Activated CD8-positive, alpha-beta T cell treated with anti-CD3 and anti-CD28 coated beads, Interleukin-2, amount 10 ng/mL, durations not matched to agents 7 days and 5 days (primary cell): ENCODE measurements at regions of chr2 and their contacts with region 1.

Region 1: GRCh38 chr2:985317-985898 is 34.8 kb downstream of the SNTG2 start:
- DNase-seq: peak; percentile 49
- ATAC-seq: peak; percentile 76
- H3K4me3 Mint-ChIP-seq: peak overlapping the region; percentile 34
- H3K27ac Mint-ChIP-seq: peak overlapping the region; percentile 80
- H3K4me1 Mint-ChIP-seq: peaks cover 25% of the 10 kb centered on the region
- H3K27me3 Mint-ChIP-seq: peaks cover 3% of the 10 kb centered on the region

Region 2: DNA sequence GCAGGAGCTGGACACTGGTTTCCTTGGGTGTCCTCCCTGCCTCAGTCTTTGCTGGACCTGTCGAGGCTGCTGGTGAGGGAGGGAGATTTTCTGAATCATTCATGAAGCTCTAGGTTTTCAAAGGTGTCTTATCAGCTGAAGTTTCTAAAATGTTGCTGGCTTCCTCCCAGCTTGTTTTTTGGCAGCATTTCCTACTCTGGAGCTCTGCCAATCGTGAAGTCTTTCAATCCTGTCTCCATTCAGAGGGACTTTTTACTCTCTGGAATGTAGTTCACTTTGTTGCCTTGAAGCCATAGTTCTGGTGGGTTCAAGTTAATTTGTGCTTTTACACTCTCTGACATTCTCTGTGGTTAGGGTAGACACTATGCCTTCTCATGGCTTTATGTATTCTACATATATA is 10.9 kb before region 1 on chr2:
- CTCF ChIA-PET with region 1: interaction called, 9 read pairs
- POLR2A ChIA-PET with region 1: interaction called, 18 read pairs
- DNase-seq: peak; percentile 33
- ATAC-seq: peak; percentile 35
- H3K4me3 Mint-ChIP-seq: peak overlapping the region; percentile 68
- H3K27ac Mint-ChIP-seq: peak overlapping the region; percentile 90
- H3K4me1 Mint-ChIP-seq: peaks cover 76% of the 10 kb centered on the region
- H3K27me3 Mint-ChIP-seq: no peaks in the 10 kb centered on the region

Region 3: DNA sequence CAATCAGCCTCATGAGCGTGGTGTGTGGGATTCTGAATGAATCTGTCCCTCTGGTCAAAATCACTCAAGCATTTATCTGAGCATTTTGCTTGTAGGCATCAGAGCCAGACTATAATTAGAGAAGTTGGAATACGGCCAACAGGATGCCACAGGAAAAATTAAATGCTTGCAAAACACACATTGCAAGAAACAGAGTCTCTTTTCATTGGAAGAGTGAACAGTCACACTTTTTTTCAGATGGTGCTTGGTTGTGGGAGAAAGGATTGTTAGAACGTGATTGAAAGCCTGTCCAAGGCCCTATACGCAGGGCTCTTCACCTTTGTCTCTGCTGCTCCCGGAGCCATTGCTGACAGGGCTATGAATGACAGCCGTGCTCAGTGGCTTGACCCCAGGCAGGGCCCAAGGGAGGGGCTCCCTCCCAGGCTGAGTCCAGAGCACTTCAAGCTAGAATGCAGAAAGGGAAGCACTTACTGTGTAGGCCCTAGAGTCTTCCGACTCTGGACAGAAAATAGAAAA is 25.1 kb after region 1 on chr2:
- CTCF ChIA-PET with region 1: no interaction called
- POLR2A ChIA-PET with region 1: no interaction called
- DNase-seq: no peak
- ATAC-seq: no peak
- H3K4me3 Mint-ChIP-seq: no peak overlapping the region
- H3K27ac Mint-ChIP-seq: no peak overlapping the region
- H3K4me1 Mint-ChIP-seq: no peaks in the 10 kb centered on the region
- H3K27me3 Mint-ChIP-seq: peaks cover 13% of the 10 kb centered on the region